PC-3 (cell line): ENCODE measurements at regions of chr12 and their contacts with region 1.

Region 1: GRCh38 chr12:56724972-56725722 is at the start of gene NACA:
- DNase-seq: peak; percentile 97
- ATAC-seq: peak; percentile 94
- H3K4me3 ChIP-seq: peak within 1 kb of the TSS; percentile 88
- H3K27ac ChIP-seq: peak within 1 kb of the TSS; percentile 77
- H3K4me1 ChIP-seq: peaks cover 39% of the 10 kb centered on the region
- H3K27me3 ChIP-seq: no peaks in the 10 kb centered on the region
- CTCF ChIP-seq: no peak
- total RNA-seq, gene NACA: 839 and 1,420 TPM in 2 replicates

Region 2: GRCh38 chr12:56688129-56688845 is 36.9 kb before region 1 on chr12 and contains the start of gene PTGES3:
- CTCF ChIA-PET with region 1: no interaction called
- POLR2A ChIA-PET with region 1: interaction called, 12 read pairs
- intact Hi-C with region 1: loop called (anchors 2 kb)
- DNase-seq: peak; percentile 98
- ATAC-seq: peak; percentile 82
- H3K4me3 ChIP-seq: peak within 1 kb of the TSS; percentile 95
- H3K27ac ChIP-seq: peak within 1 kb of the TSS; percentile 87
- H3K4me1 ChIP-seq: peaks cover 10% of the 10 kb centered on the region
- H3K27me3 ChIP-seq: no peaks in the 10 kb centered on the region
- CTCF ChIP-seq: no peak
- total RNA-seq, gene PTGES3: 165 and 172 TPM in 2 replicates